ENCODE measurements at regions of chr3 and their contacts with region 1.

Region 1: DNA sequence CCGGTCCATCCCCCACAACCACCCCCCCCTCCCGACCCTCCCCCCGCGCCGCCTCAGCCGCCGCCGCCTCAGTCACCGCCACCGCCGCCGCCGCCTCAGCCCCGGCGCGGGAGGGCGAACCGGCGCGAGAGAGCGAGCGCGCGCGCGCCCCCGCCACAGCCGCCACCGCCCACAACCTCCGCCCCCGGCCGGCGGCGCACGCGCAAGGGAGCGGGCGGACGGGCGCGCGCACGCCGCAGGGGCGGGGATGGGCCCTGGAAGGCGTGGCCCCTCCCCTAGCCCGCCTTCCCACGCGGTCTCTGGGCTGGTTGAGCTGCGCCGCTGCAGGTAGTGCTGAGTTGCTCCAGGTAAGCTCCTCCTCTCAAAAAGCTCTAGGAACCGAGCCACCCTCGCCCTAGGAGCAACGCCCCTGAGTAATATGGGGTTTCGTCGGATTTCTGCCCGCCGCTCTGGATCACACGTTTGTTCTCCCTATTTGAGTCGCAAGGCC is at the start of gene TMCC1:
- DNase-seq: peak; percentile 74 to 79
- ATAC-seq: peak; percentile 85 to 86
- H3K4me3 ChIP-seq: peak within 1 kb of the TSS; percentile 92 to 97 (median 96)
- H3K27ac ChIP-seq: peak within 1 kb of the TSS; percentile 97 to 98 (median 97)
- H3K4me1 ChIP-seq: peaks cover 43 to 46% of the 10 kb centered on the region in 2 donors
- H3K27me3 ChIP-seq: no peaks in the 10 kb centered on the region
- CTCF ChIP-seq: no peak
- POLR2A ChIP-seq: peak in 1 of 2 donors; percentile 47
- total RNA-seq, gene TMCC1: 18.8 to 24.7 (median 20.2) TPM

Region 2: GRCh38 chr3:129650256-129650872 is 243.3 kb before region 1 on chr3:
- in situ Hi-C with region 1: no loop called
- intact Hi-C with region 1: loop called (anchors 5 kb)
- DNase-seq: peak; percentile 35 to 71
- ATAC-seq: peak; percentile 46 to 70
- H3K4me3 ChIP-seq: no peak overlapping the region
- H3K27ac ChIP-seq: peak overlapping the region in 1 of 4 donors; percentile 9
- H3K4me1 ChIP-seq: peaks cover 26 to 35% of the 10 kb centered on the region in 2 donors
- H3K27me3 ChIP-seq: no peaks in the 10 kb centered on the region
- CTCF ChIP-seq: peak; percentile 51 to 81 (median 71)
- POLR2A ChIP-seq: no peak

Region 3: DNA sequence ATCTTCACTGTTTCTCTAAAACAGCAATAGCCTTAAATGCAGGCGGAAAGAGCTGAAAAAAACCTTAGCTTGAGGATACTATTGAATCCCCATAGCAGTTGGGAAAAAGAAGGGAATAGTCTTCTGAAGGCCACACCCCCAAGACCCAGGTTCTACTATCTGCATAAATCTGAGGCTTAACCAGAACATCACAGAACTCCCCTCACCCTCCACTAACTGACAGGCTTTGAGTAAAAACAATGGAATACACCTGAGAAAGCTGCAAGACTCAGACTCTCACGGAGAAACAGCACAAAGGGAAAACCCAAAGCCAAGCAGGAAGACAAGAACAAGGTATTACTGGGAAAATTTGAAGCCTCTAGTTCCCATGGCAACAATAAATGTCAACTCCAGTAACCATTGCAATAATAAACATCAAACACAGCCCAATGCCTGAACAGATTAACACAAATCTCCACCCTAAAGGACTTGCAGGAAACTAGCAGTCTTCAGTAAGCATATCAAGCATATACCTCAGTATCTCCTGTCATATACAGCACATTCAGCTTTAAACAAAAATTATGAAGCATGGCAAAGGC is 56.5 kb before region 1 on chr3:
- in situ Hi-C with region 1: no loop called
- intact Hi-C with region 1: loop called (anchors 5 kb)
- DNase-seq: no peak
- ATAC-seq: no peak
- H3K4me3 ChIP-seq: no peak overlapping the region
- H3K27ac ChIP-seq: no peak overlapping the region
- H3K4me1 ChIP-seq: peaks cover 28 to 49% of the 10 kb centered on the region in 2 donors
- H3K27me3 ChIP-seq: no peaks in the 10 kb centered on the region
- CTCF ChIP-seq: no peak
- POLR2A ChIP-seq: no peak

Region 4: GRCh38 chr3:129855454-129856419 is 37.9 kb before region 1 on chr3:
- in situ Hi-C with region 1: no loop called
- intact Hi-C with region 1: loop called (anchors 5 kb)
- DNase-seq: no peak
- ATAC-seq: peak; percentile 66 to 84
- H3K4me3 ChIP-seq: peak overlapping the region in 2 of 4 donors; percentile 0 to 22
- H3K27ac ChIP-seq: peak overlapping the region; percentile 65 to 73 (median 69)
- H3K4me1 ChIP-seq: peaks cover 16 to 20% of the 10 kb centered on the region in 2 donors
- H3K27me3 ChIP-seq: no peaks in the 10 kb centered on the region
- CTCF ChIP-seq: no peak
- POLR2A ChIP-seq: no peak